ENCODE measurements at regions of chr9 and their contacts with region 1.

Region 1: DNA sequence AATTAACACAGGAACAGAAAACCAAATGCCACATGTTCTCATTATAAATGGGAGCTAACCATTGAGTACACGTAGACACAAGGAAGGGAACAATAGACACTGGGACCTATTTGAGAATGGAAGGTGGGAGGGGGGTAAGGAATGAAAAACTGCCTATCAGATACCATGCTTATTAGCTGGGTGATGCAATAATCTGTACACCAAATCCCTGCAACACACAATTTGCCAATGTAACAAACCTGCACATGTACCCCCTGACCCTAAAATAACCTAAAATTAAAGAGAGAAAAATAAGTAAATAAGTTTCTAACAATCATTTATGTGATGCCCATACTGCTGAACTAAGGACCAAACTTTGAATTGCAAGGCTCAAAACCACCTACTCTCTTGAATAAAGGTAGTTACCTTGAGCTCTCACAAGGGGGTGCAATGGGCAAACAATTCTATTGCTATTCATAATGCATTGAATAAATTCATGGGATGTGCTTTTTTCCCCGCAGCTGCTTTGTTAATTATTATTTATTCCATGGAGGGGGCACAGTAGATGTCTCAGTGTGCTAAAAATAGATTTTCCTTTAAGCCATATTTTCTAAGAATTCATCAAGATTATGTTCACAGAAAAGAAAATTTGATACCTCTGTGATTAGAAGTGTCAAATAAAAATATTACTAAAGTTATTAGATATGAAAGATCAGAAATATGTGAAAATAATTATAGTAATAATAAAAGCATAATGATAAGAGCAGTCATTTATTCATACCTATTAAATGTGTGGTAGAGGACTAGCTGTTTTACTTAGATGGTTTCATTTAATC is 76.2 kb upstream of the PTPN3 start:
- DNase-seq: no peak
- H3K4me3 ChIP-seq: no peak overlapping the region
- H3K27ac ChIP-seq: no peak overlapping the region
- H3K4me1 ChIP-seq: no peaks in the 10 kb centered on the region
- H3K27me3 ChIP-seq: no peaks in the 10 kb centered on the region
- CTCF ChIP-seq: peak in 2 of 3 experiments; percentile 67 to 72; a peak in 3 of 4 replicates
- EP300 ChIP-seq: no peak
- POLR2A ChIP-seq: no peak
- RAD21 ChIP-seq: peak; percentile 88 to 90

Region 2: DNA sequence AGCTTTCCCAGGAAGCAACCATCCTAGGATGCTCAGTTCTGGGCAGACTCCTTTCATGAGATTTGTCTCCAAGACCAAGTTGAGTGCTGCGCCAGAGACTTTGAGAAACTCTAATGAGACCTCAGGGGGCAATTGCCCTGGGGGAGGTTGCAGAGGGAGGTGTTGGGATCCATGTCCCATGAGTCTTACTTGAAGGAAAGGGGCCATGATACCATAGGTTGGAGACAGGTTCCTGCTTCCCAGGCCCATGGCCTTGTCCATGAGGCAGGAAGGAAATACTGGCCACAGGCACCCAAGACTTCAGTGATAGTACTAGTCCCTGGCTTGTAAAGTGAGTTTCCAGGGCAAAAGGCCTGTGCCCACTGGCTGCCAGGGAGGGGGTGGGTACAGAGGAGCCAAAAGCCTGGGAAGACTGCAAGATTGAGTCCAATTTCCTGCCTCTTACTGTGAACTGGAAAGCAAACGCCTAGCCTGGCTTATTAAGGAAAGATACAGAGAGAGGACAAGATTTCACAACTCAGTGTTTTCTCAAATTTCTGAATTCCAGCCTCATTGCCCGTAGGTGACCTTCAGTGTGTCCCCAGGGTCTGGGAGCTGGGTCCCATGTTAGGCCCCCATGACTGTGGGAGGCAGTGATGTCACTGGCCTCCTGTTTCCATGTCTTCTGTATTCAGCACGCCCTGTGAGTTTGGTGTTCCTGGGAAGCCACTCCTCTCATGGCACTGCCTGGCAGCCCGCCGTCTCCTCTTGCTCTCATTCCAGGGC is 15.7 kb before region 1 on chr9:
- CTCF ChIA-PET with region 1: interaction called, 11 read pairs
- POLR2A ChIA-PET with region 1: no interaction called
- DNase-seq: no peak
- H3K4me3 ChIP-seq: no peak overlapping the region
- H3K27ac ChIP-seq: no peak overlapping the region
- H3K4me1 ChIP-seq: peaks cover 2 to 10% (median 6%) of the 10 kb centered on the region in 4 experiments; a peak in 6 of 7 replicates
- H3K27me3 ChIP-seq: no peaks in the 10 kb centered on the region; a peak in 1 of 7 replicates
- CTCF ChIP-seq: no peak
- EP300 ChIP-seq: no peak
- POLR2A ChIP-seq: no peak
- RAD21 ChIP-seq: no peak

Region 3: GRCh38 chr9:109590945-109591344 is 16.7 kb after region 1 on chr9:
- CTCF ChIA-PET with region 1: interaction called, 22 read pairs
- POLR2A ChIA-PET with region 1: no interaction called
- DNase-seq: no peak
- H3K4me3 ChIP-seq: no peak overlapping the region
- H3K27ac ChIP-seq: no peak overlapping the region
- H3K4me1 ChIP-seq: no peaks in the 10 kb centered on the region
- H3K27me3 ChIP-seq: no peaks in the 10 kb centered on the region
- CTCF ChIP-seq: no peak
- EP300 ChIP-seq: no peak
- POLR2A ChIP-seq: no peak
- RAD21 ChIP-seq: no peak

Region 4: DNA sequence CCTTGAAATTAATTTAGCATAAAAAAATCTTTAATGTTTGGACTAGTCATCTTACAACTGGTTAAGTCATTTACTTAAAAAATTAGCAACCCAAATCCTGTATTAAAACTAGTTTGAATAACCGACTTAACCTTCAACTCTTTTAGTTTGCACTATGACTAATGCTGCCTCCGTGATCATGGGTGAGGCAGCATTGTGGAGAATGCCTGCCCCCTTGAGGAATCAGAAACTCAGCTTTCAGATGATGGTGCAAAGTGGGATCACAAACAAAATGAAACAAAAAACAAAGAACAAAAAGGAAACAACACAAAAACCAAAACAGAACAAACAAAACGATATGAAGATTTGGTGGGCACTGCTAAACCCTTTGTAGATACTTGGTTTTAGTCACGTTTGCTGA is 78.7 kb after region 1 on chr9:
- CTCF ChIA-PET with region 1: interaction called, 35 read pairs
- POLR2A ChIA-PET with region 1: no interaction called
- DNase-seq: no peak
- H3K4me3 ChIP-seq: no peak overlapping the region
- H3K27ac ChIP-seq: no peak overlapping the region
- H3K4me1 ChIP-seq: no peaks in the 10 kb centered on the region; a peak in 2 of 7 replicates
- H3K27me3 ChIP-seq: no peaks in the 10 kb centered on the region
- CTCF ChIP-seq: peak; percentile 39 to 64 (median 61)
- EP300 ChIP-seq: no peak
- POLR2A ChIP-seq: no peak
- RAD21 ChIP-seq: peak; percentile 79 to 82

Region 5: DNA sequence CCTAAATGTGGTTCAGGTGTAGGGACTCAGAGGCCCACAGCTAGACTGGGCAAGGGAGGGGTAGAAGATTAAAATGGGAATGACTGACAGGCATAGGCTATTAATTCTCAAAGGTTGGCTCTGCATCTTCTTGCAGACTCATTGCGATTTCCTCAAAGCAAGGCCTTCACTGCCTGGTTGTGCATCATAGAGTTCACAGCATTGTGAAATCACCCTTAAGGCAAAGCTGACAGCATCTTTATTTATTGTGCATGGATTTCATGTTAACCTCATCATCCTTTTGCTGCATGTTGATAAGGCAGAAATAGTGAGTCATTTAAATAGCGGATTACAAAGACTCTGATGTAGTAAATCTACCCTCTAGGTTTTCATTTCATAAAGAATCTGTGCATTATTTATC is 192.1 kb after region 1 on chr9:
- CTCF ChIA-PET with region 1: no interaction called
- POLR2A ChIA-PET with region 1: no interaction called
- DNase-seq: no peak
- H3K4me3 ChIP-seq: no peak overlapping the region
- H3K27ac ChIP-seq: no peak overlapping the region
- H3K4me1 ChIP-seq: peaks cover 6 to 22% (median 14%) of the 10 kb centered on the region in 4 experiments
- H3K27me3 ChIP-seq: no peaks in the 10 kb centered on the region
- CTCF ChIP-seq: no peak
- EP300 ChIP-seq: no peak
- POLR2A ChIP-seq: no peak
- RAD21 ChIP-seq: no peak

Region 6: GRCh38 chr9:109817846-109818472 is 243.7 kb after region 1 on chr9:
- CTCF ChIA-PET with region 1: interaction called, 68 read pairs
- POLR2A ChIA-PET with region 1: interaction called, 3 read pairs
- DNase-seq: peak; percentile 41 to 69
- H3K4me3 ChIP-seq: no peak overlapping the region
- H3K27ac ChIP-seq: no peak overlapping the region
- H3K4me1 ChIP-seq: peaks cover 0 to 5% (median 0%) of the 10 kb centered on the region in 4 experiments; a peak in 1 of 7 replicates
- H3K27me3 ChIP-seq: no peaks in the 10 kb centered on the region
- CTCF ChIP-seq: peak in 2 of 3 experiments; percentile 78 to 81; a peak in 3 of 4 replicates
- EP300 ChIP-seq: peak in 1 of 2 experiments; percentile 14; a peak in 1 of 3 replicates
- POLR2A ChIP-seq: no peak
- RAD21 ChIP-seq: peak; percentile 85 to 89

Measured in H1 (cell line).